GM18951 (cell line): ENCODE measurements at regions of chr20 and their contacts with region 1.

Region 1: GRCh38 chr20:22333885-22334545 is 250.4 kb downstream of the FOXA2 start:
- POLR2A ChIP-seq: no peak

Region 2: GRCh38 chr20:22389836-22390542 is 56.0 kb after region 1 on chr20:
- in situ Hi-C with region 1: no loop called
- POLR2A ChIP-seq: no peak

Region 3: DNA sequence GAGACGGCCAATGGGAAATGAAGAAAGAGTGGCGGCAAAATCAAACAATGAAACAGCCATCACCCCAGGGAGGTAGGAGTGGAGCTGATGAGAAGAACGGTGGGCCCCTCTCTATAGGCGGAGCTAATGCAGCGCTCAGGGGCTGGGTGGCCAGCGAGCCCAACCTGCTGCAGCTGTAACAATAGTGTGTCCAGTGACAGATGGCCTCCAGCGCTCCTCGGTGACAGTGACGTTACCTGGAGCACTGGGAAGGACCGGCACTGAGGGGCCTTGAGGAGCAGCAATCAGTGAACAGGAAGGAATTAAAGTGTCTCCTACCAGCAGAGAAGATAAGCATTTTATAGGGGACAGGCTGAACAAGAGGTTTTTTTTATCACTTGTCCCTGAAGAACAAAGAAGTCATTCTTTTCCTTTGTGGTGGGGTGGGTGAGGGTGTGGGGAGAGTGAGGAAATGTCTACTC is 168.7 kb after region 1 on chr20:
- in situ Hi-C with region 1: no loop called
- POLR2A ChIP-seq: no peak

Region 4: GRCh38 chr20:22586645-22587310 is 252.8 kb after region 1 on chr20:
- in situ Hi-C with region 1: loop called (anchors 25 kb)
- POLR2A ChIP-seq: no peak

Region 5: DNA sequence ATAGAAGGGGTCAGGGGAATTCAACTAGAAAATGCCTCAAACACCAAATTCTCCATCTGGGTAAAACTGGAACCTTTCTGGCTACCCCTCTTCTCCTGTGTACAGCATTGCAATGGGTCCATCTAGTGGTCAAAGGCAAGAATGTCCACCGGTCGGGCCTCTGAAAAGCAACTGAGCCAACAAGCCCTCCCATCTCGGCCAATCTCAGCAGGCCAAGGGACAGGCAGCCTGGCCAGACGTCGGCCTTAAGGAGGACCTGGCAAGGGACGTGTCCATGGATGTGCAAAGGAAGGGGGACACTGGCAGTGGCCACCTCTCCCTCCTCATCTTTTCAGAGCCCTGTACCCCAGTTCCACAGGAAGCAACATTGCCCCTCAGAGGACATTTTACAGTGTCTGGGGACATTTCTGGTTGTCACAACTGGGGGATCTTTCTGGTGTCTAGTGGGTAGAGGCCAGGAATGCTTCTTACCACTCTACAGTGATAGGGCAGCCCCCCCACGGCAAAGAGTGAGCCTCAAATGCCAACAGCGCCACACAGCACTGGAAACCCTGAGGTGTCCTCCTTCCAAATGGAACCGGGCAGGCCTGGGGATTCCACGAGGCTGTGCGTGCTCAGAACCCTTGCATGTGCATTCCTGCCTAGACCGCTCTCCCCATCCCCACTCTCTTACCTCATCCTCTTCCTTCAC is 350.2 kb after region 1 on chr20:
- in situ Hi-C with region 1: loop called (anchors 10 kb)
- POLR2A ChIP-seq: no peak